PC-3 (cell line): ENCODE measurements at regions of chr3 and their contacts with region 1.

Region 1: GRCh38 chr3:9194508-9195184 is 54.8 kb downstream of the SRGAP3 start:
- DNase-seq: peak; percentile 83
- ATAC-seq: peak; percentile 94
- H3K4me3 ChIP-seq: no peak overlapping the region
- H3K27ac ChIP-seq: peak overlapping the region; percentile 64
- H3K4me1 ChIP-seq: peaks cover 21% of the 10 kb centered on the region
- H3K27me3 ChIP-seq: no peaks in the 10 kb centered on the region
- CTCF ChIP-seq: no peak

Region 2: GRCh38 chr3:9172851-9173321 is 21.8 kb before region 1 on chr3:
- CTCF ChIA-PET with region 1: no interaction called
- POLR2A ChIA-PET with region 1: no interaction called
- intact Hi-C with region 1: loop called (anchors 2 kb)
- DNase-seq: peak; percentile 87
- ATAC-seq: peak; percentile 78
- H3K4me3 ChIP-seq: no peak overlapping the region
- H3K27ac ChIP-seq: peak overlapping the region; percentile 8; the same call in 1 of the 2 replicates
- H3K4me1 ChIP-seq: peaks cover 32% of the 10 kb centered on the region
- H3K27me3 ChIP-seq: no peaks in the 10 kb centered on the region
- CTCF ChIP-seq: peak; percentile 48; the same call in 1 of the 2 replicates